Calu3 (cell line): ENCODE measurements at regions of chr2 and their contacts with region 1.

Region 1: GRCh38 chr2:225788571-225789094 is 389.1 kb downstream of the NYAP2 start:
- DNase-seq: no peak
- H3K4me3 Mint-ChIP-seq: no peak overlapping the region
- H3K27ac Mint-ChIP-seq: no peak overlapping the region
- H3K4me1 Mint-ChIP-seq: no peaks in the 10 kb centered on the region
- H3K27me3 Mint-ChIP-seq: no peaks in the 10 kb centered on the region
- CTCF ChIP-seq: no peak

Region 2: GRCh38 chr2:225602205-225602604 is 186.4 kb before region 1 on chr2:
- CTCF ChIA-PET with region 1: no interaction called
- intact Hi-C with region 1: no loop called
- DNase-seq: no peak
- H3K4me3 Mint-ChIP-seq: no peak overlapping the region
- H3K27ac Mint-ChIP-seq: no peak overlapping the region
- H3K4me1 Mint-ChIP-seq: no peaks in the 10 kb centered on the region
- H3K27me3 Mint-ChIP-seq: no peaks in the 10 kb centered on the region
- CTCF ChIP-seq: no peak

Region 3: GRCh38 chr2:225756198-225756597 is 32.4 kb before region 1 on chr2:
- CTCF ChIA-PET with region 1: interaction called, 10 read pairs
- intact Hi-C with region 1: no loop called
- DNase-seq: no peak
- H3K4me3 Mint-ChIP-seq: no peak overlapping the region
- H3K27ac Mint-ChIP-seq: no peak overlapping the region
- H3K4me1 Mint-ChIP-seq: no peaks in the 10 kb centered on the region
- H3K27me3 Mint-ChIP-seq: no peaks in the 10 kb centered on the region
- CTCF ChIP-seq: no peak